IMR-90 (cell line): ENCODE measurements at regions of chr2 and their contacts with region 1.

Region 1: DNA sequence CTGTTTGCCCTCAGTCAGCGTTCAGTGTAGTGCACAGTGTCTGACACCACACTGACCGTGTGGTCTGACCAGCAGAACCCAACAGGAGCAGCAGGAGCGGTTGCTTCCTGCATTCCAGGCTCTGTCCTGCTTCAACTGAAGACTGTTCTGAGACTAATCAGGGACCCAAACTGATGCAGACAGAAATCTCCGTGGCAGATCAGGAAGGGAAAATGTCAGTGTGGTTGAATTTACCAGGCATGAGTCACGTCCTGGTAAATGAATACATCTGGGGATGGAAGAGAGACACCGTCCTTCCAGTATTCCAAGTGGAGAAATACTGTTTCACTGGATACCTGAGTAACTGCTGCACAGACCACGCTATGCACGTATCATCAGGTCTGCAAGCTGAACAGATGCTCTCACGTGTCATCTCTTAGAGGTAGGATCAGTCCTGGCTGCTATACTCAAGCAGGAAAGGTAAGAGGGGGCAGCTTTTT is 223.6 kb upstream of the EPAS1 start:
- DNase-seq: peak; percentile 97
- ATAC-seq: peak; percentile 73
- H3K4me3 ChIP-seq: peak overlapping the region; percentile 33; the same call in 1 of the 2 replicates
- H3K27ac ChIP-seq: peak overlapping the region; percentile 86
- H3K4me1 ChIP-seq: peaks cover 29% of the 10 kb centered on the region
- H3K27me3 ChIP-seq: no peaks in the 10 kb centered on the region
- CTCF ChIP-seq: no peak
- POLR2A ChIP-seq: peak; percentile 68
- RAD21 ChIP-seq: peak; percentile 29

Region 2: GRCh38 chr2:46062637-46063412 is 10.8 kb before region 1 on chr2:
- CTCF ChIA-PET with region 1: interaction called, 11 read pairs
- POLR2A ChIA-PET with region 1: no interaction called
- dilution Hi-C with region 1: no loop called
- in situ Hi-C with region 1: no loop called
- intact Hi-C with region 1: no loop called
- DNase-seq: peak; percentile 87
- ATAC-seq: peak; percentile 66
- H3K4me3 ChIP-seq: no peak overlapping the region
- H3K27ac ChIP-seq: no peak overlapping the region
- H3K4me1 ChIP-seq: peaks cover 15% of the 10 kb centered on the region
- H3K27me3 ChIP-seq: no peaks in the 10 kb centered on the region
- CTCF ChIP-seq: peak; percentile 82
- POLR2A ChIP-seq: no peak
- RAD21 ChIP-seq: peak; percentile 95

Region 3: GRCh38 chr2:46134531-46135181 is 61.1 kb after region 1 on chr2:
- CTCF ChIA-PET with region 1: no interaction called
- POLR2A ChIA-PET with region 1: no interaction called
- dilution Hi-C with region 1: no loop called
- in situ Hi-C with region 1: no loop called
- intact Hi-C with region 1: loop called (anchors 5 kb)
- DNase-seq: no peak
- ATAC-seq: no peak
- H3K4me3 ChIP-seq: no peak overlapping the region
- H3K27ac ChIP-seq: no peak overlapping the region
- H3K4me1 ChIP-seq: peaks cover 5% of the 10 kb centered on the region
- H3K27me3 ChIP-seq: no peaks in the 10 kb centered on the region
- CTCF ChIP-seq: no peak
- POLR2A ChIP-seq: no peak
- RAD21 ChIP-seq: no peak

Region 4: GRCh38 chr2:46666044-46666679 is 592.6 kb after region 1 on chr2:
- CTCF ChIA-PET with region 1: no interaction called
- POLR2A ChIA-PET with region 1: no interaction called
- dilution Hi-C with region 1: no loop called
- in situ Hi-C with region 1: no loop called
- intact Hi-C with region 1: no loop called
- DNase-seq: no peak
- ATAC-seq: no peak
- H3K4me3 ChIP-seq: no peak overlapping the region
- H3K27ac ChIP-seq: peak overlapping the region; percentile 26; the same call in 1 of the 2 replicates
- H3K4me1 ChIP-seq: peaks cover 25% of the 10 kb centered on the region
- H3K27me3 ChIP-seq: no peaks in the 10 kb centered on the region
- CTCF ChIP-seq: no peak
- POLR2A ChIP-seq: no peak
- RAD21 ChIP-seq: no peak